ENCODE measurements at regions of chr4 and their contacts with region 1.

Region 1: DNA sequence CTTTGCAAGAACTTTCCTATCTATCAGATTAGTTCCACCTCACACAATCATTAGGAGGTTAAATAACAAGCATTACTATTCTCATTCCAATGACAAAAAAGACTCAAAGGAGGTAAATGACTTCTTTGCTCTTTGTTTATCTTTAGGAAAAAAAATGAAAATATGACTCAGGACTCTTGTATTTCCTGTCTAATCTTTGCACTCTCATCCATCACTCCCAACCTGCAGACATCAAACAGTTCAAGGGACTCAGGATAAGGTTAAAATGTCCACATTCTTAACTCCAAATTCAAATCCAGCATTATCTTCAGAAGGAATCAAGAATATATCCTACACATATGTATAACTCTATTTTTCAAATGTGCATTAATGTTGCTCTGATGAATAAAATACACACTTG is 139.6 kb downstream of the UNC5C start:
- DNase-seq: peak; percentile 28 to 38
- H3K4me3 ChIP-seq: no peak overlapping the region
- H3K4me3 Mint-ChIP-seq: peak overlapping the region; percentile 22
- H3K27ac Mint-ChIP-seq: peak overlapping the region; percentile 82
- H3K4me1 ChIP-seq: peaks cover 54% of the 10 kb centered on the region
- H3K4me1 Mint-ChIP-seq: peaks cover 50% of the 10 kb centered on the region
- H3K27me3 ChIP-seq: no peaks in the 10 kb centered on the region
- H3K27me3 Mint-ChIP-seq: no peaks in the 10 kb centered on the region
- CTCF ChIP-seq: no peak

Region 2: GRCh38 chr4:95204267-95204844 is 204.8 kb before region 1 on chr4:
- CTCF ChIA-PET with region 1: no interaction called
- POLR2A ChIA-PET with region 1: no interaction called
- intact Hi-C with region 1: no loop called
- DNase-seq: no peak
- H3K4me3 ChIP-seq: no peak overlapping the region
- H3K4me3 Mint-ChIP-seq: no peak overlapping the region
- H3K27ac Mint-ChIP-seq: no peak overlapping the region
- H3K4me1 ChIP-seq: no peaks in the 10 kb centered on the region
- H3K4me1 Mint-ChIP-seq: no peaks in the 10 kb centered on the region
- H3K27me3 ChIP-seq: no peaks in the 10 kb centered on the region
- H3K27me3 Mint-ChIP-seq: no peaks in the 10 kb centered on the region
- CTCF ChIP-seq: no peak

Region 3: DNA sequence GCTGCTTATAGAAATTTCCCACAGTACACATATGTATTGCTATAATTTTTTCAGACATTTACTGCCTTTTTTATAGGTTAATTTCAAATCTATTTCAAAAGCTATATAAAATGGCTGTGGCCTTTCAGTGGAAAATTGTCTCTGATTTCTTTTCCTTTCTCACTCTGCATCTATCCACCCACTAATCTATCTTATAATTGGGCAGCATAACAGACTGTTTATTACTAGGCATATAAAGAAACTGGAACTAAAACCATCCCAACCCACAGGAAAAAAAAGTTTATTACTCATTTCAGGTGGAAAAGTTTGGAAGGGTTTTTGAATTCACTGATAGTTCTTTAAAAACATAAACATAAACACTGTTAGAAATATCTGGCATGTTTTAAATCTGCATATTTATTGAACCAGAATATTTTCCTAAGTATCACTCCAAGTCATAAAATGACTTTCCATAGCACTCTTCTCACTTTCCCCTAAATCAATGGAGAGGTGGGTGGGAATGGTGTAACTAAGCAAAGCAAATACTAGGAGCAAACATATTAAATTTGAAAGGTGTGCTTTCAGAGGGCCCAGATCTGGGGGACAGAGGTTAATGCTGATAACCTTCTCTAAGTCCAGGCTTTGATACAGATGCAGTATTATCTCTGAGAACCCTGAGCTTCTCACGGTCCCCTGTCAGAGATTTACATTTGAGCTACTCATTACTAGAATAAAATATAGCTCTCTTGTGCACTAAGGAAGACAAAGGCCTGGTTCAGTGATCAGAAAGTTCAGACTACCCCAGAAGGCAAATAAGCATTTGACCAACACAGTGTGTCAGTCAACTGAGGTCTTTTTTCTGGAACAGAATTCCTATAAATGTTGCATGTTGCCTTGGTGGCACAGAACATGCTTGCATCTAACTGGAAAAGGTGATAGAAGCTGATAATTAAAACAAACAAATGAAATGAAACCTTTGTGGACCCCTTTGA is 188.6 kb before region 1 on chr4:
- CTCF ChIA-PET with region 1: no interaction called
- POLR2A ChIA-PET with region 1: no interaction called
- intact Hi-C with region 1: loop called (anchors 5 kb)
- DNase-seq: peak; percentile 54 to 67
- H3K4me3 ChIP-seq: no peak overlapping the region
- H3K4me3 Mint-ChIP-seq: no peak overlapping the region
- H3K27ac Mint-ChIP-seq: no peak overlapping the region
- H3K4me1 ChIP-seq: peaks cover 30% of the 10 kb centered on the region
- H3K4me1 Mint-ChIP-seq: peaks cover 6% of the 10 kb centered on the region
- H3K27me3 ChIP-seq: no peaks in the 10 kb centered on the region
- H3K27me3 Mint-ChIP-seq: no peaks in the 10 kb centered on the region
- CTCF ChIP-seq: no peak

Region 4: GRCh38 chr4:95358421-95358820 is 50.7 kb before region 1 on chr4:
- CTCF ChIA-PET with region 1: no interaction called
- POLR2A ChIA-PET with region 1: no interaction called
- intact Hi-C with region 1: loop called (anchors 1 kb)
- DNase-seq: peak; percentile 13 to 39
- H3K4me3 ChIP-seq: no peak overlapping the region
- H3K4me3 Mint-ChIP-seq: no peak overlapping the region
- H3K27ac Mint-ChIP-seq: no peak overlapping the region
- H3K4me1 ChIP-seq: peaks cover 41% of the 10 kb centered on the region
- H3K4me1 Mint-ChIP-seq: peaks cover 9% of the 10 kb centered on the region
- H3K27me3 ChIP-seq: no peaks in the 10 kb centered on the region
- H3K27me3 Mint-ChIP-seq: no peaks in the 10 kb centered on the region
- CTCF ChIP-seq: no peak

Region 5: GRCh38 chr4:95388911-95389310 is 20.2 kb before region 1 on chr4:
- CTCF ChIA-PET with region 1: no interaction called
- POLR2A ChIA-PET with region 1: no interaction called
- intact Hi-C with region 1: loop called (anchors 1 kb)
- DNase-seq: no peak
- H3K4me3 ChIP-seq: no peak overlapping the region
- H3K4me3 Mint-ChIP-seq: no peak overlapping the region
- H3K27ac Mint-ChIP-seq: no peak overlapping the region
- H3K4me1 ChIP-seq: peaks cover 40% of the 10 kb centered on the region
- H3K4me1 Mint-ChIP-seq: peaks cover 29% of the 10 kb centered on the region
- H3K27me3 ChIP-seq: no peaks in the 10 kb centered on the region
- H3K27me3 Mint-ChIP-seq: no peaks in the 10 kb centered on the region
- CTCF ChIP-seq: no peak

Region 6: DNA sequence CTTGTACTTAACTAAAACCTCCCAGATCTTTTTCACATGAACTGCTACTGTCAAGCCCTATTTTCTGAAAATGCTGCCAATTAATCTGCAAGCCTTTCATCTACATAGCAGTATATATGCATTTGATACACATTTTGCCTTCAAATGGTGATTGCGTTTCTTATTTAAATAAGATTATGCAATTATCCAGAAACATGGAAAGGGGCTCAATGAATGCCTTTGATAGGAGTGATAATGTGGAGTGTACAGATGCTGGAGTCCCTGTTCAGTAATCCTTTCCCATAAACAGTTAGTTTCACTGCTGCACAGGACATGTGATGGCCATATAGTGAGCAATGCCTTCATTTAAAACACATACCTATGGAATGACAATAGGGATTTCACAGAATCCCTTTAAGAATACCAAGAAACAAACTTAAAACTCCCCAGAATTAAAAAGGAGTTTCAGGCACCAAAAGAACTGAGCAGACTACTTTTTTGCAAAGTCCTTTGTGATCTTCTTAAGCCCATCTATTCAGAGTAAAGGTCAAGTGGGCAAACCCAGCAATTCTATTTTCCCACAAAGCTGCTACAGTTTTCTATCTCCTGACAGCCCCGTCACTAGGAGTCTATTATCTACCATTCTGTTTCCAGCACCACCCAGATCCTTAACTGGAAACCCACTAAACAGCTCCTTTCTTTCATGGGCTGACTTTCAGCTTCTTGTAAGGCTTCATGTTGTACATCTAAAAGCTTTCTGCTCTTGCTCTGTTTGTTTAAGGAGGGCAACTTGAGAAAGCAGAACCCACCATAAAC is 19.4 kb after region 1 on chr4:
- CTCF ChIA-PET with region 1: no interaction called
- POLR2A ChIA-PET with region 1: no interaction called
- intact Hi-C with region 1: loop called (anchors 2 kb)
- DNase-seq: no peak
- H3K4me3 ChIP-seq: no peak overlapping the region
- H3K4me3 Mint-ChIP-seq: no peak overlapping the region
- H3K27ac Mint-ChIP-seq: no peak overlapping the region
- H3K4me1 ChIP-seq: no peaks in the 10 kb centered on the region; the same call in 1 of the 2 replicates
- H3K4me1 Mint-ChIP-seq: peaks cover 4% of the 10 kb centered on the region
- H3K27me3 ChIP-seq: no peaks in the 10 kb centered on the region
- H3K27me3 Mint-ChIP-seq: no peaks in the 10 kb centered on the region
- CTCF ChIP-seq: no peak

Region 7: GRCh38 chr4:95465010-95465409 is 55.9 kb after region 1 on chr4:
- CTCF ChIA-PET with region 1: no interaction called
- POLR2A ChIA-PET with region 1: no interaction called
- intact Hi-C with region 1: loop called (anchors 1 kb)
- DNase-seq: peak; percentile 30 to 41
- H3K4me3 ChIP-seq: no peak overlapping the region
- H3K4me3 Mint-ChIP-seq: no peak overlapping the region
- H3K27ac Mint-ChIP-seq: no peak overlapping the region
- H3K4me1 ChIP-seq: peaks cover 10% of the 10 kb centered on the region
- H3K4me1 Mint-ChIP-seq: peaks cover 15% of the 10 kb centered on the region
- H3K27me3 ChIP-seq: no peaks in the 10 kb centered on the region
- H3K27me3 Mint-ChIP-seq: no peaks in the 10 kb centered on the region
- CTCF ChIP-seq: no peak

Measured in Caco-2 (cell line).